HAP-1 (cell line): ENCODE measurements at regions of chr15 and their contacts with region 1.

Region 1: GRCh38 chr15:60362321-60363086 is 35.3 kb downstream of the ANXA2 start:
- DNase-seq: no peak
- H3K4me3 ChIP-seq: no peak overlapping the region
- H3K4me1 ChIP-seq: no peaks in the 10 kb centered on the region
- H3K27me3 ChIP-seq: no peaks in the 10 kb centered on the region

Region 2: DNA sequence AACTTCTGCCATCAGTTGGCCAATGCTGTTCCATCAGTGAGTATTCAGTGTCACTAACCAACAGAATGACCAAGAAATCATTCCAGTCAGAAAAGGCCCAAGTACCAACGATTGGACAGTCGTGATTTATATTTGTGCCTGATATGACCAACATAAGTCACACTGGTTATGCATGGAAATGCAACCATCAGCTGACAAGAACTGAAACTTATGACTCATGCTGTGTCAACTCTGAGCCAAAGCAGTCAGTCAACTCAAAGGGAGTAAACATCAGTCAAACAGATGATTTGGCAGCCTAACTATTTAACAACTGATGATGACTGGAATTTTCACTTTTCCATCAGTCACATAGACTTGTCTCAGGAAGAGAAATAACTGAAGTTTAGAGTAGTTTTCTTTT is 107.1 kb before region 1 on chr15:
- in situ Hi-C with region 1: no loop called
- DNase-seq: no peak
- H3K4me3 ChIP-seq: no peak overlapping the region
- H3K4me1 ChIP-seq: no peaks in the 10 kb centered on the region
- H3K27me3 ChIP-seq: peaks cover 15% of the 10 kb centered on the region; the same call in 1 of the 2 replicates

Region 3: DNA sequence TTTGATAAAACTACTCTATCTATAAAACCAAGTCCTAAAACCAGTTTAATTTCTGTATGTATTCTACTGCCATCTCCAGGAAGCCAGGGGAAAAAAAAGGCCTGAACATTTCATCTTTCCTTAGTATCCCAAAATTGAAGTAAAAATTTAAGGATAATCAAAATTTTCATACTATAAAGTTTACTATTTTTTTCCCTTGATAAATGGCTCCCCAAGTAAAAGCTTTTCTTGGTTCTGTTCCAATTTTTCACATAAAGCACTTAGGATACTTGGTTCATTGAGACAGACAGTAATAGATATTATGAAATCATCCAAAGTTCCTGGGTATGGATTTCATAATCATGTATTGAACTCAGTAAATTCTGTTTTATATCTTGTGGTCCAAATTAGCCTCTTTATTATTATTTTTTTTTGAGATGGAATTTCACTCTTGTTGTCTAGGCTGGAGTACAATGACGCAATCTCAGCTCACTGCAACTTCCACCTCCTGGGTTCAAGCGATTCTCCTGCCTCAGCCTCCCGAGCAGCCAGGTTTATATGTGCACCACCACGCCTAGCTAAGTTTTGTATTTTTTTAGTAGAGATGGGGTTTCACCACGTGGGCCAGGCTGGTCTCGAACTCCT is 81.9 kb after region 1 on chr15:
- in situ Hi-C with region 1: loop called (anchors 5 kb)
- DNase-seq: no peak
- H3K4me3 ChIP-seq: no peak overlapping the region
- H3K4me1 ChIP-seq: no peaks in the 10 kb centered on the region
- H3K27me3 ChIP-seq: no peaks in the 10 kb centered on the region